Activated CD8-positive, alpha-beta T cell treated with anti-CD3 and anti-CD28 coated beads for 36 hours (primary cell): ENCODE measurements at regions of chr19 and their contacts with region 1.

Region 1: DNA sequence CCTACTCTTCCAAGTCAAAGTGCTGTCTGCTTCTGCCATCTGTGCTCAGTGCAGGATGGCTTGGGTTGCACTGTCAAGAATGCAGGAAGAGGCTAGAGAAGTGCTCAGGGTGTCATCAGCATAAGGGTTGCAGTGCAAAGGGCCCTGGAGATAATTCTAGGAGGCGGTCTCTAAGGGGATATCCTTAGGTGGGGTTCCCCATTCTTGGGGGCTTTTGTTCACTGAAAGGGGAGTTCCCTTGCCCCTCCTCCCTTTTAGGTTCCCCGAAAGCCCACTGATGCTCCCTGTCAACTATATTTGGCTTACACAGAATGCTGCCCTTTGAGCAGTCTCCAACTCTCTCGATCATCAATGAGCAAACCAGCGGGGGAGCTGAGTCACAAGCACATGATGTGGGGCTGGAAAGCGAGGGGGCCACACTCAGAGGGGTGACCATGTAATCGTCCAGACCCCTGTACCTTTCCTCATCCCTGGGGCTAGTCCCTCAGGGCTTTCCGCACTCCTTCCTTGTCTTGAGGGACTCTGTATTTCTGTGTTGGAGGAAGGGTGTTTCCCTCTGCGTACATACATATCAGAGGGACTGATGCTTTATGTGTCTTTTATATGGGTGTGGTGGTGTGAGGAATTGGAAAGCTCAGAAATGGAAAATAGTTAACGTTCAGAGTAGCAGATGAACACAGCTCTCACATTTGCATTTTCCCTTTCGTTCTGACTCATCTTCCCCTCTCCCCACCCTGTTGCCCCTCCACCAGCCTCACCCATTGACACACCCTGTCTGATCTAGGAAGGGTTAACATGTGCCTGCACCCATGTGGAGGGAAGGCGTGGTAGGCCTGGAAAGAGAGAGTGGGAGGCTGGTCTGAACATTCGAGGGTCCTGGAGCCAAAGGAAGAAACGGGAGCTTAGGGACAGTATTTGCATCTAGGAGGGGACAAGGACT is 6.7 kb downstream of the ZBTB32 start:
- DNase-seq: peak; percentile 95
- ATAC-seq: peak; percentile 55
- H3K4me3 Mint-ChIP-seq: peak overlapping the region; percentile 73
- H3K27ac Mint-ChIP-seq: peak overlapping the region; percentile 100
- H3K4me1 Mint-ChIP-seq: peaks cover 38% of the 10 kb centered on the region
- H3K27me3 Mint-ChIP-seq: no peaks in the 10 kb centered on the region
- CTCF ChIP-seq: no peak

Region 2: GRCh38 chr19:35596366-35596999 is 114.6 kb before region 1 on chr19:
- CTCF ChIA-PET with region 1: no interaction called
- POLR2A ChIA-PET with region 1: no interaction called
- intact Hi-C with region 1: no loop called
- DNase-seq: peak; percentile 59
- ATAC-seq: peak; percentile 93
- H3K4me3 Mint-ChIP-seq: no peak overlapping the region
- H3K27ac Mint-ChIP-seq: peak overlapping the region; percentile 59
- H3K4me1 Mint-ChIP-seq: peaks cover 5% of the 10 kb centered on the region
- H3K27me3 Mint-ChIP-seq: peaks cover 8% of the 10 kb centered on the region
- CTCF ChIP-seq: no peak

Region 3: GRCh38 chr19:35648017-35648961 is 62.8 kb before region 1 on chr19 and contains the start of gene COX6B1:
- CTCF ChIA-PET with region 1: interaction called, 4 read pairs
- POLR2A ChIA-PET with region 1: interaction called, 13 read pairs
- intact Hi-C with region 1: no loop called
- DNase-seq: peak; percentile 97
- ATAC-seq: peak; percentile 72
- H3K4me3 Mint-ChIP-seq: peak within 1 kb of the TSS; percentile 99
- H3K27ac Mint-ChIP-seq: peak within 1 kb of the TSS; percentile 93
- H3K4me1 Mint-ChIP-seq: peaks cover 36% of the 10 kb centered on the region
- H3K27me3 Mint-ChIP-seq: no peaks in the 10 kb centered on the region
- CTCF ChIP-seq: no peak
- total RNA-seq, gene COX6B1: 432 to 437 TPM

Region 4: GRCh38 chr19:35693830-35694599 is 17.0 kb before region 1 on chr19:
- CTCF ChIA-PET with region 1: interaction called, 137 read pairs
- POLR2A ChIA-PET with region 1: interaction called, 215 read pairs
- intact Hi-C with region 1: loop called (anchors 1 kb)
- DNase-seq: peak; percentile 96
- ATAC-seq: peak; percentile 97
- H3K4me3 Mint-ChIP-seq: no peak overlapping the region
- H3K27ac Mint-ChIP-seq: peak overlapping the region; percentile 58
- H3K4me1 Mint-ChIP-seq: peaks cover 25% of the 10 kb centered on the region
- H3K27me3 Mint-ChIP-seq: no peaks in the 10 kb centered on the region
- CTCF ChIP-seq: peak; percentile 99

Region 5: DNA sequence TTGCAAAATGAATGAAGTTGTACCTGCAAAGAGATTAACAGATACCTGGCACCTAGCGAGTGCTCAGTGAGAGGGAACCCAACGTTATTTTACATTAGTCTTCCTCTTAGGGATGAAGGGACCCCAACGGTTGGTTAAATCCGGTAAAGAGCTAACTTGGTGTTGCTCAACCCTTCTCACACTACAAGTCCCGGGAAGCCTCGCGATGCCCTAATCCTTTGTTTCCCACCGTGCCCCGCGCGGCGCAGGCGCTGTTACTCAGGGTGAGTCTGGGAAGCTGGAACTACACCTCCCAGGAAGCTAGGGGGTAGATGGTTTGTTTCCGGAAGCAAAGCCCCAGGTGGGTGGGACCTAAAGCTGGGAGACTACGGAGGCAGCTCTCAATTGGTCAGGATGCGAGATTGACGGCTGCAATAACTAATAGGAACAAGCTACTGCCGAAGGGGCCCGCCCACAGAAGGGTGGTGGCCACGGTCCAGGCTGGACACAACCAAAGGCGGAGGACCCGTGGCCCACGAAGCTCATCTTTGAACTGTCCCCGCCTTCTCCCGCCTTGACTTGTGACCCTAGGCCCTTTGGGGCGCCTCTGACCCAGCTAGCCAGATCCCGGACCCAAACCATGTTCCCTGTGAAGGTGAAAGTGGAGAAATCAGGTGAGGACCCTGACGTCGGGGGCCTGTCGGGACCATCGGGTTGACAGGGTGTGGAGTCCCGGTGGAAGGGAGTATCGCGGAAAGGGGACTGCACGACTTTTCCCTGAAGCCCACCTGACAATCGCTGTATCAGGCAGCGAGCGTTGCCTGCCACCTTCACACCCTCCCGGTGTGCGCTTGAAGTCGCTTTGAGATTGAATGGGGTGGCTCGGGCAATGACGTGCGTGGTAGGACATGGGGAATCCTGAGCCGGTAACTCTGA is 37.3 kb after region 1 on chr19 and contains the start of gene LIN37:
- CTCF ChIA-PET with region 1: interaction called, 18 read pairs
- POLR2A ChIA-PET with region 1: interaction called, 99 read pairs
- intact Hi-C with region 1: loop called (anchors 5 kb)
- DNase-seq: peak; percentile 100
- ATAC-seq: peak; percentile 81
- H3K4me3 Mint-ChIP-seq: peak within 1 kb of the TSS; percentile 99
- H3K27ac Mint-ChIP-seq: peak within 1 kb of the TSS; percentile 96
- H3K4me1 Mint-ChIP-seq: peaks cover 36% of the 10 kb centered on the region
- H3K27me3 Mint-ChIP-seq: no peaks in the 10 kb centered on the region
- CTCF ChIP-seq: no peak
- total RNA-seq, gene LIN37: 4.5 to 7.8 TPM

Region 6: GRCh38 chr19:35805526-35806102 is 94.6 kb after region 1 on chr19:
- CTCF ChIA-PET with region 1: no interaction called
- POLR2A ChIA-PET with region 1: no interaction called
- intact Hi-C with region 1: no loop called
- DNase-seq: no peak
- ATAC-seq: no peak
- H3K4me3 Mint-ChIP-seq: no peak overlapping the region
- H3K27ac Mint-ChIP-seq: no peak overlapping the region
- H3K4me1 Mint-ChIP-seq: peaks cover 9% of the 10 kb centered on the region
- H3K27me3 Mint-ChIP-seq: peaks cover 2% of the 10 kb centered on the region
- CTCF ChIP-seq: no peak

Region 7: DNA sequence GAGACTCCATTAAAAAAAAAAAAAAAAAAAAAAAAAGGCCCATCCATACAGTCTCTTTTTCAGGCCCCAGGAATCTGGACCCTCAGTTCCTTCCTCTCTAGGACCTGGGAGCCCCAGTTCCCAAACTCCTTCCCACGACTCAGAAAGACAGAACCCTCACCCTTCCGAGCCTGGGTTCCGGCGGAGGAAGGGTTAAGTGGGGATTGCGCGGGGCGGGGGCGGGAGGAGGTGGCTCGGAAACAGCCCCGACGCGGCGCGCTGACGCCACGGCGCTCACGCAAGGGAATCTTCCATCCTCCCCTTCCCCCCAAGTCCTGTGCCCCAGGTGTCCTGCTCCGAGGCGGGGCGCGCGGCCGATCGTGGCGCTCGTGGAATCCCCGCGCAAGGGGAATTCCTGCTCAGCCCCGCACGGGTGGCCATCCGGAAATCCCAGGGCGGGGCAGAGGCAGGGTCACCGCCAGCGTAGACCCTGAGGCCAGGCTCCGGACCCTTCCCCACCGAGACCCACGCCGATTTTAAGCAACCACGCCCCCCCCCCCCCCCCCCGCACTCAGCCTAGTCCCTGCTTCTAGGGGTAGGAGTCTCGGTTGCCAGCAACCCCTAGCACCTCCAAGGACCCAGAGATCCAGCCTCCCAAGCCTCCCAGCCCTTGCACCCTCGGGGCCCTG is 188.6 kb after region 1 on chr19:
- CTCF ChIA-PET with region 1: no interaction called
- POLR2A ChIA-PET with region 1: interaction called, 4 read pairs
- intact Hi-C with region 1: loop called (anchors 2 kb)
- DNase-seq: peak; percentile 93
- ATAC-seq: peak; percentile 57
- H3K4me3 Mint-ChIP-seq: peak overlapping the region; percentile 86
- H3K27ac Mint-ChIP-seq: peak overlapping the region; percentile 95
- H3K4me1 Mint-ChIP-seq: peaks cover 49% of the 10 kb centered on the region
- H3K27me3 Mint-ChIP-seq: no peaks in the 10 kb centered on the region
- CTCF ChIP-seq: no peak